ENCODE measurements at regions of chr1 and their contacts with region 1.

Region 1: GRCh38 chr1:113133038-113133437 is 60.0 kb downstream of the LRIG2 start:
- DNase-seq: no peak
- H3K4me3 ChIP-seq: no peak overlapping the region
- H3K27ac ChIP-seq: no peak overlapping the region
- H3K4me1 ChIP-seq: peaks cover 0 to 21% (median 7%) of the 10 kb centered on the region in 4 donors
- H3K27me3 ChIP-seq: no peaks in the 10 kb centered on the region
- CTCF ChIP-seq: no peak
- EP300 ChIP-seq: no peak
- POLR2A ChIP-seq: no peak

Region 2: GRCh38 chr1:113677250-113678158 is 544.5 kb after region 1 on chr1:
- intact Hi-C with region 1: loop called (anchors 10 kb)
- DNase-seq: peak in 1 of 2 donors; percentile 78
- H3K4me3 ChIP-seq: no peak overlapping the region
- H3K27ac ChIP-seq: no peak overlapping the region
- H3K4me1 ChIP-seq: peaks cover 0 to 13% (median 4%) of the 10 kb centered on the region in 4 donors
- H3K27me3 ChIP-seq: no peaks in the 10 kb centered on the region
- CTCF ChIP-seq: peak in 5 of 7 experiments; percentile 25 to 67 (median 53)
- EP300 ChIP-seq: no peak
- POLR2A ChIP-seq: no peak